BJ (cell line): ENCODE measurements at regions of chr1 and their contacts with region 1.

Region 1: DNA sequence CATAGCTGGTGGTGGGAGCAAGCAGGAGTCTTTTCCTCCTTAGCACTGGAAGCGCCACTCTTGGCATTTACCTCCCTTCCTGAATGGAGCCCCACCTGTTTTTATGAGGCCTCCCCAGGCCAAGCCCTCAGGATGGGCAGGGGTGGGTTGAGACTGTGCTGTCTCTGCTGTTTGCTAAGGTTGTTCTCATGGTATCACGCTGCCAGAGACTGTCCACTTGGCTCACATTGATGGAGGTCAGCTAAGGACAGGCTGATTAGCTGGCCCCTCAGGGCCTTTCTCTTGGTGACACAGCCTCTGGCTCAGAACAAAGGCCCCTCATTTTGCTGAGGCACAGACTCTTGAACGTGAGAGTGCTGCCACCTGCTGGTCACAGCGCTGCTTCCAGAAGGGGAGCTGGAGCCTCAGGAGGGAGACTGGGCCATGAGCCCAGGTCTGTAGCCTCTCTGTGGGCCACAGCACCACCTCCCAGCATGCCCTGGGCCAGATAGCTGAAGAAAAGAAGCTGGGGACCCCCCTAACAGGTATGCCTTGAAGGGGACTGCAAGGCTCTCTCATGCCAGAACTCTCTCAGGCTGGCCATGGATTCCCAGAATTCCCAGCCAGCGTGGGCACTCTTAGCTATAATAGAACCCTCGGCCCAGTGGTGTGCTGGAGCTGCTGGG is 85.6 kb downstream of the CD58 start:
- DNase-seq: no peak
- H3K4me3 ChIP-seq: no peak overlapping the region
- H3K27me3 ChIP-seq: no peaks in the 10 kb centered on the region; the same call in 1 of the 2 replicates
- CTCF ChIP-seq: peak; percentile 88

Region 2: GRCh38 chr1:116151739-116152576 is 333.2 kb before region 1 on chr1:
- CTCF ChIA-PET with region 1: interaction called, 164 read pairs
- POLR2A ChIA-PET with region 1: no interaction called
- DNase-seq: peak; percentile 9
- H3K4me3 ChIP-seq: peak overlapping the region; percentile 44
- H3K27me3 ChIP-seq: peaks cover 16% of the 10 kb centered on the region
- CTCF ChIP-seq: peak; percentile 69

Region 3: GRCh38 chr1:116418091-116418830 is 66.9 kb before region 1 on chr1:
- CTCF ChIA-PET with region 1: interaction called, 29 read pairs
- POLR2A ChIA-PET with region 1: no interaction called
- DNase-seq: no peak
- H3K4me3 ChIP-seq: peak overlapping the region; percentile 69
- H3K27me3 ChIP-seq: 0 out of 2 replicates have a peak, but pooled peaks cover 1% of the 10 kb centered on the region
- CTCF ChIP-seq: no peak

Region 4: DNA sequence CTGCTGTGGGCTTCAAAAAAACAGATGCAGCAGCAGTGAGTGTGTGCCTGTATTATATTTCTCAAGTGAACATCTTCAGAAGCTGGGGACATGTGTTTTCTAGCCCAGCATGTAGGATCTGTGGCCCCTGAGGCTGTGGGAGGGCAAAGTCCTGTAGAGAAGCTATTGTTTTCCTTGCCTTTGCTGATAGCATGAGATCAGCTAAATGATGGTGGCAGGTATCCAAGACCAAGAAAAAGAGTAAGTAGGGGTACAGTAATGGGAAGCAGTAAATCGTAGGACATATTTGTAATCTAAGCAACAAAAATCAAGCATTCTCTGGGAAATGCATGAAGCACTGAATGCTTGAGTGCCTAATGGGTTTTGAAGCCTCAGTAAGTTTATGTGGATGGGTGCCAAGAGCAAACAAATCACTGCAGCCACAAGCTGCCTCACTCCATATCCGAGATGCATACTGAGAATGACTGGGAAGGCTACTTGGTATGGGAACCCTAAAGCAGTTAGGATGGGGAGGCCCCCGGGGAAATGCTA is 12.7 kb before region 1 on chr1:
- CTCF ChIA-PET with region 1: interaction called, 48 read pairs
- POLR2A ChIA-PET with region 1: no interaction called
- DNase-seq: no peak
- H3K4me3 ChIP-seq: no peak overlapping the region
- H3K27me3 ChIP-seq: peaks cover 5% of the 10 kb centered on the region; the same call in 1 of the 2 replicates
- CTCF ChIP-seq: no peak

Region 5: GRCh38 chr1:116504308-116505156 is 19.3 kb after region 1 on chr1:
- CTCF ChIA-PET with region 1: interaction called, 110 read pairs
- POLR2A ChIA-PET with region 1: no interaction called
- DNase-seq: no peak
- H3K4me3 ChIP-seq: no peak overlapping the region
- H3K27me3 ChIP-seq: no peaks in the 10 kb centered on the region
- CTCF ChIP-seq: no peak

Region 6: GRCh38 chr1:116586741-116587143 is 101.5 kb after region 1 on chr1:
- CTCF ChIA-PET with region 1: no interaction called
- POLR2A ChIA-PET with region 1: no interaction called
- DNase-seq: no peak
- H3K4me3 ChIP-seq: no peak overlapping the region
- H3K27me3 ChIP-seq: no peaks in the 10 kb centered on the region
- CTCF ChIP-seq: no peak